K562 (cell line): ENCODE measurements at regions of chr1 and their contacts with region 1.

Region 1: DNA sequence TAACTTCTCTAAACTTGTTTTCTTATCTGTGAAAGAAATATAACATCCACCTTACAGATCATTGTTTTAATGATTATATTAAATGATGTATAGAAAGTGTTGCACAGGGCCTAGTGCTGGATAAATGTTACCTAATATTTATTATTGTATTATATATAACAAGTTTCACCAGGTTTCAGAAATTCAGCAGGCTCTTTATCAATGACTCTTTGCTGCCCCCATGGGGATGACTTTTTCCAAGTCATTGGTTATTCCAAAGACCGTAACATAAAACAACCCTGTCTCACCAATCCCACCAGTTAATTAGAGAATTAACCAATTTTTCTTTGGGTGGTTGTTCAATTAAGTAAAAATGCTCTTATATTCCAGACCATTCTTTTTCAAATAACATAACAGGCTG is 7.3 kb upstream of the DEDD start:
- DNase-seq: peak in 3 of 4 experiments; percentile 43 to 68 (median 60)
- ATAC-seq: peak; percentile 88
- H3K4me3 ChIP-seq: no peak overlapping the region
- H3K27ac ChIP-seq: no peak overlapping the region
- H3K4me1 ChIP-seq: peaks cover 0 to 4% of the 10 kb centered on the region in 2 experiments; a peak in 3 of 5 replicates
- H3K27me3 ChIP-seq: no peaks in the 10 kb centered on the region
- CTCF ChIP-seq: peak; percentile 55 to 85 (median 59); a peak in 5 of 6 replicates
- EP300 ChIP-seq: no peak
- POLR2A ChIP-seq: no peak
- RAD21 ChIP-seq: peak; percentile 65 to 75

Region 2: DNA sequence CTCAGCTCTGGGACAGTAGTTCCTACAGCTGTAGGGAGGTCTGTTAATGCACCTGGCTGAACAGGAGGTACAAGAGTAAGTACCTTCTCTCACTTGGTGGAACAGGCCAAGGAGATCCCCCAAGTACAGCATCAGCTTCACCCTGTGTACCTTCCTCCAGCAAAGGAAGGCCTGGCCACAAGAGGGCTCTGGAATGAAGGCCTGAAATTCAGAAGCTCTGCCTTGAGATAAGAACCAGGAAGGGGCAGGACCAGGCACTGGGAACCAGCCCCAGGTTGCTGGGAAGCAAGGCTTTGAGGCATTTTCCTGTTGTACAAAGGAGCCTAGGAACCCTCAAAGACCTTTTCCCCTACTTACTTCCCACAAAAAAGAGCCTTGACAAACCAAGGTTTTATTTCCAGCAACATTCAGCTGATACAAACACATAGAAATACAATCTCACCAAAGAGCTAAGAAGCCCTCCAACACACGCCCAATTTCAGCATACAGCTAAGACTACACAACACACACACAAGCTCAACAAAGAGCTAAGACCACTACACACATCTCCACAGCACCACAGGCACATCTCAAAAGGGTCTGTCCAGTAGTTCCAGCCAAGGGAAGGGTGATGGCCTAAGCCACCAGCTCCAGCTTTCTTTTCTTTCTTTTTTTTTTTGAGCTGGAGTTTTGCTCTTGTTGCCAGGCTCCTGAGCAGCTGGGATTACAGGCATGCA is 142.3 kb before region 1 on chr1:
- CTCF ChIA-PET with region 1: interaction called, 8 read pairs
- POLR2A ChIA-PET with region 1: no interaction called
- in situ Hi-C with region 1: no loop called
- intact Hi-C with region 1: loop called (anchors 2 kb)
- DNase-seq: peak; percentile 67 to 85 (median 76)
- ATAC-seq: peak; percentile 93
- H3K4me3 ChIP-seq: no peak overlapping the region
- H3K27ac ChIP-seq: peak overlapping the region; percentile 52
- H3K4me1 ChIP-seq: peaks cover 7 to 20% of the 10 kb centered on the region in 2 experiments; a peak in 3 of 5 replicates
- H3K27me3 ChIP-seq: no peaks in the 10 kb centered on the region
- CTCF ChIP-seq: peak; percentile 91 to 93 (median 92)
- EP300 ChIP-seq: peak; percentile 29; the same call in 1 of the 2 replicates
- POLR2A ChIP-seq: no peak; the same call in 1 of the 2 replicates
- RAD21 ChIP-seq: peak; percentile 77 to 95

Region 3: DNA sequence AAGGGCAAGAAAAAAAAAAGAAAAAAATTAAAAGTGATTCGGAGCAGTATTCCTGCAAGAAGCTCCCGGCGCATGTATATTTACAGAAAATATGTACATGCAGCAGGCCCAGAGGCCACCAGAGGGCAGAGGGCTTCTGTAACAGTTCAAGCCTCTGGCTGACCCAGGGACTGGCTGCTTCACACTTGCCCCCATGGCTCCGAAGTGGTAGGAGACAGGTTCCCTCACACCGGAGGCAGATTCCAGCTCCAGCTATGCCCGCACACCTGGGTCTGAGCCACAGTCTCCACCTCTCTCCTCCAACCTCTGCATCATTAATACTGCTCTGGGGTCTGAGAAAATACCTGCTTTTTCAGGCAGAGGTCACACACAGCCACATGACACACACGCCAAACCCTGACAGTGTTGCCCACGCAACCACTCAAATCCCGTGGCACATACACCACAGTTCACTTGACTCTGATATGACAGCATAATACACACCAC is 67.8 kb before region 1 on chr1:
- CTCF ChIA-PET with region 1: interaction called, 15 read pairs
- POLR2A ChIA-PET with region 1: no interaction called
- in situ Hi-C with region 1: no loop called
- intact Hi-C with region 1: loop called (anchors 10 kb)
- DNase-seq: peak; percentile 77 to 80 (median 78)
- ATAC-seq: peak; percentile 90
- H3K4me3 ChIP-seq: no peak overlapping the region
- H3K27ac ChIP-seq: no peak overlapping the region
- H3K4me1 ChIP-seq: peaks cover 22 to 23% of the 10 kb centered on the region in 2 experiments
- H3K27me3 ChIP-seq: no peaks in the 10 kb centered on the region
- CTCF ChIP-seq: peak; percentile 86 to 91 (median 90)
- EP300 ChIP-seq: no peak
- POLR2A ChIP-seq: no peak
- RAD21 ChIP-seq: peak; percentile 75 to 88